Endothelial cell of umbilical vein (primary cell): ENCODE measurements at regions of chr6 and their contacts with region 1.

Region 1: DNA sequence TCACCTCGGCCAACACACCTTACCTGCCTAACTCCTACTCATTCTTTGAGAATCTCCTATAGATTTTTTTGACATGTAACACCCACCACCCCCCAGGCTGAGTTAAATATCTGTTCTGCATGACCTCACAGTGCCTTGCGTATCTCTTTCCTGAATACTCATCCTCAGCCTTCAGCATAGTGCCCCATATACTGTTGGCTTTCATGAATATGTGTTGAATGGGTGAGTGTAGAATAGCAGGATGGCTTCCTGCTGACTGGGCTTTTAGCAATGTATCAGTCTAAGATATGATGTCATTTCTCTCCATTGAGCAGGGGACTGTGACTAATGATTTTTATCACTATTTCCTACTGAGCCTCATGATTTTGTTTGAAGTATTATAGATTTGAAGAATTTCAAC is 361.6 kb upstream of the MARCKS start:
- DNase-seq: peak; percentile 91
- H3K4me3 ChIP-seq: no peak overlapping the region
- H3K27ac ChIP-seq: peak overlapping the region; percentile 100
- H3K4me1 ChIP-seq: peaks cover 33% of the 10 kb centered on the region
- H3K27me3 ChIP-seq: no peaks in the 10 kb centered on the region
- CTCF ChIP-seq: no peak
- POLR2A ChIP-seq: no peak

Region 2: DNA sequence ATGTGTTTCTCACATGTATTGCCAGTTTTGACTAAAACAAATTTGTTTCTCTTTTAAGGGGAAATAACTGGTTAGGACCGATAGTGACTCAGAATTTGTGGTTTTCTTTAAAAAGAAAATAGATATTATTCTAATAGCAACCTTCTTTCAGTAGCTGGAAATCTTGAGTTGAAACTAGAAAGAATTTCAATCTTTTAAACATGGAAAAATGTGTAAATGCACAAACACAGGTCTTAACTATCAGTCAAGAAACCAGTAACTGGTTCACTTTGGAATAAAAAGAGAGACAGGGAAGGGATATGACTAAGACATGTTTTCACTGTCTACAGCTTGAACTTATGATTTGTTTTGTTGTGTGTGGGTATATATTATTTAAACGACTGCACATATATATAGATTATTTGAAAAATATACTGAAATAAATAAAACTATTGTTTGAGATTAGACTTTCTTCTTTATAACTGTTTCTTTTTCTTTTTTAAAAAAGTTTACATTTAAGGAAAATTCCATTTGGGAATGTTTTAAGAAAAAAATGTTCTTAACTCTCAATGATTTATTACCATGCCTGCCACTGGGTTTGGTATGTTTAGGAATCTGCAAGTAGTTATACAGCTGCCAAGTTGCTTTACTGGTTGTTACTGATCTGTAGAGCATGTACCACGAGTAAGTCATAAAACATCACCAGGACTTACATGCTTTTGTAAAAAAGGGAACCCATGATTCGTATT is 391.7 kb before region 1 on chr6:
- CTCF ChIA-PET with region 1: no interaction called
- POLR2A ChIA-PET with region 1: no interaction called
- dilution Hi-C with region 1: no loop called
- intact Hi-C with region 1: loop called (anchors 1 kb)
- DNase-seq: peak; percentile 88
- H3K4me3 ChIP-seq: peak overlapping the region in 1 of 3 experiments; percentile 12
- H3K27ac ChIP-seq: peak overlapping the region; percentile 98
- H3K4me1 ChIP-seq: peaks cover 27% of the 10 kb centered on the region
- H3K27me3 ChIP-seq: no peaks in the 10 kb centered on the region
- CTCF ChIP-seq: no peak
- POLR2A ChIP-seq: no peak

Region 3: DNA sequence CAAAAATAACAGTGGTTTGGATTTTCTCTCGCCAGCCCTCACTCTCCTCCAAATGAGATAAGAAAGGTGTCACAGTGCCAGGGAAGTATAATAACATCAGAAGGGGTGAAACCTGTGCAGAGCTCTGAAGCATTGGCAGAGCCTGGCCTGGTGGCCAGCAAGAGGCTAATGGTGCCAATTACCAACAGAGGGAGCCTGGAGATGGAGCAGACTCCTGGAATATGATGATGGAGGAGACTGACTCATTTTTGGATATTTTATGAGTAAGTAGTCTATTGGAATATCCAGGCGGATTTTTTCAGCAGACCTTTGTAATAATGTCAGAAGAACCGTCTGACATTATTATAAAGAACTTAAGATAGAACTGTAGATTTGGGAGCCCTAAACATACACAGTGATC is 81.0 kb before region 1 on chr6:
- CTCF ChIA-PET with region 1: no interaction called
- POLR2A ChIA-PET with region 1: no interaction called
- dilution Hi-C with region 1: no loop called
- intact Hi-C with region 1: loop called (anchors 1 kb)
- DNase-seq: peak; percentile 79
- H3K4me3 ChIP-seq: no peak overlapping the region
- H3K27ac ChIP-seq: no peak overlapping the region
- H3K4me1 ChIP-seq: peaks cover 9% of the 10 kb centered on the region
- H3K27me3 ChIP-seq: no peaks in the 10 kb centered on the region
- CTCF ChIP-seq: peak; percentile 55 to 57
- POLR2A ChIP-seq: no peak

Region 4: DNA sequence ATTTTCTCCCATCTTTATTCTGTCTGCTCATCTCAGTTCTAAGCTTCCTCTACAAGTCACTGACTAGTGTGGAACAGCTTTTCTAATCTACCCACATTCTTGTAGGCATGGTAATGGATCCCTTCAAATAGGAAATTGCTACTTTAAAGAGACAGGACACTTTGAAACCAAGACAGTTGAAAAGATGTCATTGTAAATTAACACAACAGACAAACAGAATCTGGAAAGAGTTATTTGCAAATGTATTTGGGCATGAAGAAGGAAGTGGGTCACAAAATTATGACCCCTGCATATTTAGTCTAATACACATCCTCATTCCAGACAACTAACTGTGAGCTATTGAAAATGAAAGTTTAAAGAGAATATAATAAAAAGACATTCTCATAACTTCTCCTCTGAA is 63.5 kb after region 1 on chr6:
- CTCF ChIA-PET with region 1: no interaction called
- POLR2A ChIA-PET with region 1: no interaction called
- dilution Hi-C with region 1: no loop called
- intact Hi-C with region 1: loop called (anchors 1 kb)
- DNase-seq: peak; percentile 62
- H3K4me3 ChIP-seq: no peak overlapping the region
- H3K27ac ChIP-seq: peak overlapping the region; percentile 78
- H3K4me1 ChIP-seq: peaks cover 35% of the 10 kb centered on the region
- H3K27me3 ChIP-seq: no peaks in the 10 kb centered on the region
- CTCF ChIP-seq: no peak
- POLR2A ChIP-seq: no peak

Region 5: GRCh38 chr6:113632220-113632864 is 136.8 kb after region 1 on chr6:
- CTCF ChIA-PET with region 1: no interaction called
- POLR2A ChIA-PET with region 1: no interaction called
- dilution Hi-C with region 1: no loop called
- intact Hi-C with region 1: loop called (anchors 1 kb)
- DNase-seq: peak; percentile 99
- H3K4me3 ChIP-seq: peak overlapping the region in 2 of 3 experiments; percentile 6 to 33
- H3K27ac ChIP-seq: peak overlapping the region; percentile 83
- H3K4me1 ChIP-seq: peaks cover 22% of the 10 kb centered on the region
- H3K27me3 ChIP-seq: no peaks in the 10 kb centered on the region
- CTCF ChIP-seq: no peak
- POLR2A ChIP-seq: no peak

Region 6: DNA sequence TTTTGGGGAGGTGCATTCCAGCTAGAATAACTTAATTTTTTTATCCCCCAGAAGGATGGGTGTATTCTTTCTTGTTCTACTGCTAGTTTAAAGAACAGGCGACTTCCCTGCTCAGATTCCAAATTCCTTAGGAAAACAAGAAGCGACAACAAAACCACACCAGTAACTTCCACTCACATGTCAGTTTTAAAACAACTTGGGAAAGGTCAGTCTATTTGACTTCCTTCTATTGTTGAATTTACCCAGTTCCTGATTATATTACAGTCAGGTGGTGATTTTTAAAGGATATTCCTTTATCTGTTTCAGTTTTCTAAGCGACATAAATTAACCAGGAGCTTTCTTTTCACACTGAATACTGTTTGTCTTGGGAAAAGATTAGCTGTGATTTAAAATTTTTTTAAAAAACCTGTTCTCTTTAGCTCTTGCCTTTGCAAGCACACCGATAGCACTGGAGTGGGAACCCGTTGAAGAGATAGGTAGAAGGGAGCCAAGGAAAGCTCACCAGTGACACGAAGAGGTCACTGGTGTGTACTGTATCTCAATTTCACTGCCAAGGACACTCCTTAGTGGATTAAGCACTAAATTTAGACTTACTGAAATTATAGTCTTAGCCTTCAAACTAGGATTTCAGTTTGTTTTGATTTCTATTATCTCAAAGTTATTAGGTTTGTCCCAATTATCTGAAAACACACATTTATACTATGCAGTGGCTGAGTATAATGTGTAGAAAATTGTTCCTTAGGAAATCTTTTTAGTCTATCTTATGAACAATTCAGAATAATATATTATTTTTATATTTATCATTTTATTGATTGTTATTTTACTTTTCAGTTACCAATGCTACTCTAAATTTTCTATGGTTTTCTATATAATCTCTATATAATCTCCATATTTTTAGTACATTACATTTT is 383.9 kb after region 1 on chr6:
- CTCF ChIA-PET with region 1: interaction called, 3 read pairs
- POLR2A ChIA-PET with region 1: no interaction called
- dilution Hi-C with region 1: no loop called
- intact Hi-C with region 1: loop called (anchors 1 kb)
- DNase-seq: peak; percentile 91
- H3K4me3 ChIP-seq: peak overlapping the region in 1 of 3 experiments; percentile 69
- H3K27ac ChIP-seq: peak overlapping the region; percentile 63
- H3K4me1 ChIP-seq: peaks cover 9% of the 10 kb centered on the region
- H3K27me3 ChIP-seq: no peaks in the 10 kb centered on the region
- CTCF ChIP-seq: peak; percentile 68
- POLR2A ChIP-seq: no peak